ENCODE measurements at regions of chr16 and their contacts with region 1.

Region 1: GRCh38 chr16:5776876-5777275 is 679.3 kb upstream of the EEF2KMT start:
- DNase-seq: no peak
- H3K4me3 ChIP-seq: no peak overlapping the region
- H3K27ac ChIP-seq: no peak overlapping the region
- H3K4me1 ChIP-seq: no peaks in the 10 kb centered on the region
- H3K27me3 ChIP-seq: no peaks in the 10 kb centered on the region
- CTCF ChIP-seq: no peak
- EP300 ChIP-seq: no peak
- POLR2A ChIP-seq: no peak

Region 2: GRCh38 chr16:7624871-7625766 is 1848.2 kb after region 1 on chr16:
- intact Hi-C with region 1: loop called in 1 of 4 experiments (anchors 5 kb)
- DNase-seq: no peak
- H3K4me3 ChIP-seq: no peak overlapping the region
- H3K27ac ChIP-seq: no peak overlapping the region
- H3K4me1 ChIP-seq: no peaks in the 10 kb centered on the region
- H3K27me3 ChIP-seq: no peaks in the 10 kb centered on the region
- CTCF ChIP-seq: no peak
- EP300 ChIP-seq: no peak
- POLR2A ChIP-seq: no peak

Measured in ovary (tissue), 10 donors.